ENCODE measurements at regions of chr7 and their contacts with region 1.

Region 1: DNA sequence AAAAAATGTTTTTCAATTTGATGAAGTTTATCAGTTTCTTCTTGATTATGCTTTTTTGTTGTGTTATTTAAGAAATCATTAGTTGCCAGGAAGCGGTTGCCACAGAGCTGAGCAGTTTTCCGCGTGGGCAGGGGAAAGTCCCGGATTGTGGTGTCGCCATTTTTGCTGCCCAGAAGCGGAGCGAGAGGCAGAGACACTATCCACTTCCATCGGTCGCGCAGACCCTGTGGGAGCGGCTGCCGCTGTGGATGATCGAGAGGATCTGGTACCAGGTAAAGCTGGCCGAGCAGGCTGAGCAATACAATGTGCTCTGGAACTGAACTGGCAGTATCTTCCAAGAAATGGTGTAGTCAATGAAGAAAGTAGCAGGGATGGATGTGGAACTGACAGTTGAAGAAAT is 119.8 kb downstream of the ZNF736 start:
- DNase-seq: peak in 1 of 4 experiments; percentile 11
- ATAC-seq: peak; percentile 41; the same call in 2 of the 3 replicates
- H3K4me3 ChIP-seq: no peak overlapping the region
- H3K27ac ChIP-seq: 0 out of 3 replicates have a peak overlapping the region, but pooled peaks have one; percentile 28
- H3K4me1 ChIP-seq: no peaks in the 10 kb centered on the region
- H3K27me3 ChIP-seq: no peaks in the 10 kb centered on the region
- CTCF ChIP-seq: no peak
- EP300 ChIP-seq: no peak
- POLR2A ChIP-seq: no peak
- RAD21 ChIP-seq: no peak

Region 2: DNA sequence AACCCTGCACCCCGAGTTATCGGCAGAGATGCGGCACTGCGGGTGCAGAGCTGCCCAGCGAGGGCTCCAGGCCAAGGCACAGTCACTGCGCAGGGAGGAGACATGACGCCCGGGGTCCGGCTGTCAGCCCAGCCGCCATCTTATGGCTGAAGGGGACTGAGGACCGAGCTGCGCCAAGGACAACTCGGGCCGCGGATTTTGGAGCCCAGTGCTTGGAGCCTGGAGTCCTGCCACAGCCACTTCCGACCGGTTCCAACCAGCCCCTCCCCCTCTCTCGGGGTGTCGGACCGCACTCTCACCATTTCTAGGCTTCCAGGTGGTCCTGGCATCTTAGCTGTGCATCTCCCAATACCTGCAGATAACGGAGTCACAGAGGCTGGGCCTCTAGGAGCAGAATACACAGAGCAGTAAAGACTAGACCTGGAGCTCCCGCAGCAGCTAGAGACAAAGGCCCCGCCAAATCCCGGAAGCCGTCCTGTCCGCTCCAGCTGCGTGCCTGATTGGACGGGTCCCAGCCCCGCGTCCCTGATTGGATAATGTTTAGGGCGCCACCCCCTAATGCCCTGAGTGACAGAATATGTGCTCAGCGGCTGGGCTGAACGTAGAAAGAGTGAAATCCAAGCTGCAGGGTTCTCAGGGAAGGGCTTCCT is 129.2 kb after region 1 on chr7 and contains the start of gene ZNF680:
- CTCF ChIA-PET with region 1: no interaction called
- POLR2A ChIA-PET with region 1: no interaction called
- in situ Hi-C with region 1: no loop called
- intact Hi-C with region 1: loop called (anchors 5 kb)
- DNase-seq: peak; percentile 84 to 95 (median 88)
- ATAC-seq: peak; percentile 96
- H3K4me3 ChIP-seq: peak within 1 kb of the TSS; percentile 76
- H3K27ac ChIP-seq: peak within 1 kb of the TSS; percentile 93
- H3K4me1 ChIP-seq: peaks cover 0 to 4% of the 10 kb centered on the region in 2 experiments; a peak in 3 of 5 replicates
- H3K27me3 ChIP-seq: no peaks in the 10 kb centered on the region
- CTCF ChIP-seq: no peak
- EP300 ChIP-seq: 0 out of 2 replicates have a peak, but pooled peaks have one; percentile 3
- POLR2A ChIP-seq: peak; percentile 89
- RAD21 ChIP-seq: no peak
- polyA plus RNA-seq, gene ZNF680: 11.6 to 12.2 TPM

Region 3: DNA sequence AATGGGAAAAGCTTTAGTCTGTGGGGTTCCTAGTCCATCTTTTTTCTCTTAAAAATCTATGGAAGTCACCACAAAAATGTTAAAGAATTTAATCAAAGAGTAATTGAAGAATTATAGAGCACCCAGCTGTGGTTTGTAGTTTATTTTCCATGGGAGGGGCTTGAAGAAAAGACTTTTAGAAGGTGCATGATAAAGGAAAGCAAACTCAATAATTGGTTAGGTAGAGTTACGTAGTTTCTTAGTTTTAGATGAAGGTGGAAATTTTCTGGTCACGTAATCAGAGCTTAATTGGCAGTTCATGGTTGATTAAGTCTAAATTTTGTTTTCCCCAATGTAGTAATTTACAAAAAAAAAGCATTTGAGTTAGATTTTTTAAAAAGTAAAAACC is 233.1 kb after region 1 on chr7:
- CTCF ChIA-PET with region 1: no interaction called
- POLR2A ChIA-PET with region 1: no interaction called
- in situ Hi-C with region 1: no loop called
- intact Hi-C with region 1: no loop called
- DNase-seq: no peak
- ATAC-seq: no peak
- H3K4me3 ChIP-seq: peak overlapping the region; percentile 97
- H3K27ac ChIP-seq: peak overlapping the region; percentile 87
- H3K4me1 ChIP-seq: peaks cover 6 to 13% of the 10 kb centered on the region in 2 experiments
- H3K27me3 ChIP-seq: no peaks in the 10 kb centered on the region
- CTCF ChIP-seq: no peak
- EP300 ChIP-seq: no peak
- POLR2A ChIP-seq: no peak
- RAD21 ChIP-seq: no peak

Measured in K562 (cell line).